ENCODE measurements at regions of chr6 and their contacts with region 1.

Region 1: GRCh38 chr6:17599885-17600526 is at the start of gene FAM8A1:
- DNase-seq: peak; percentile 92 to 98
- H3K4me3 ChIP-seq: peak within 1 kb of the TSS; percentile 81 to 94
- H3K27ac ChIP-seq: peak within 1 kb of the TSS; percentile 98
- H3K4me1 ChIP-seq: peaks cover 35% of the 10 kb centered on the region
- H3K27me3 ChIP-seq: no peaks in the 10 kb centered on the region
- CTCF ChIP-seq: peak in 2 of 3 experiments; percentile 36 to 63
- POLR2A ChIP-seq: peak in 1 of 2 donors; percentile 66
- total RNA-seq, gene FAM8A1: 28.7 TPM

Region 2: DNA sequence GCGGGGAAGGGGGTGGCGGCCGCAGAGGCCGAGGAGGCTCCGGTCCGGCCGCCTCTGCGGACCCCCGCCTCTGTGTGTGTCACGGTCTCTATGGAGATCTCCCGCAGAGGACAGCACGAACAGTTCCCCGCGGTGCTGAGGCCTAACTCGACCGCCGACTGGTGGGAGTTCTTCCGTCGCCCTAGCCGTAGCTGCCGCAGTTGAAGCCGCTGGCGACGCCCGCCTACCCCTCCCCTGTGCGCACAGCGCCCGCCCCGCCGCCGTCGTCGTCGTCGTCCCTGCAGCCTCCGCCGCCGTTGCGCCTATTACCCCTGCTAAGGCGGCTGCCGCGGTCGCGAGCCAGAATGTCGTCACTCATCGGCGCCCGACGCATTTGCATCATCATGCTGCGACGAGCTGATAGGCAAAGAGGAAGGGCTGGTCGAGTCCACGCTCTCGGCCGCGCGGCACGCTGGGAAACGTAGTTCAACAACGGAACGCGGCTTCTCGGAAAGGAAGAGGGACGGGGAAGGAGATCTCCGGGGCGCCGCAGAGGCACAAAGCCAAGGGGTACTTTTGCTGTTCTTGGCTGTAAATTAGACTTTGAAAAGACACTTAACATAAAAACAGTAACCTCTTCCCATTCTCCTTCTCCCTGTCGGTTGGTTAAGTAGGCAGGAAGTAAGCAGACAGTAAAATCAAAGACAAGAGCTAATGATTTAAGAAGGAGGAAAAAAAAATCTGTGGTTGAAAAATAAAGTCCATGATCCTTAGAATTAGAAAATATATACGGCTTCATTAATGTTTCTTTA is 106.8 kb after region 1 on chr6 and contains the start of gene NUP153:
- intact Hi-C with region 1: loop called (anchors 5 kb)
- DNase-seq: peak; percentile 97 to 98
- H3K4me3 ChIP-seq: peak within 1 kb of the TSS; percentile 73 to 88
- H3K27ac ChIP-seq: peak within 1 kb of the TSS; percentile 95
- H3K4me1 ChIP-seq: peaks cover 41% of the 10 kb centered on the region
- H3K27me3 ChIP-seq: no peaks in the 10 kb centered on the region
- CTCF ChIP-seq: peak in 1 of 3 experiments; percentile 11
- POLR2A ChIP-seq: peak in 1 of 2 donors; percentile 93
- total RNA-seq, gene NUP153: 44.0 TPM

Measured in vagina (tissue), 2 donors.